ENCODE measurements at regions of chr2 and their contacts with region 1.

Region 1: DNA sequence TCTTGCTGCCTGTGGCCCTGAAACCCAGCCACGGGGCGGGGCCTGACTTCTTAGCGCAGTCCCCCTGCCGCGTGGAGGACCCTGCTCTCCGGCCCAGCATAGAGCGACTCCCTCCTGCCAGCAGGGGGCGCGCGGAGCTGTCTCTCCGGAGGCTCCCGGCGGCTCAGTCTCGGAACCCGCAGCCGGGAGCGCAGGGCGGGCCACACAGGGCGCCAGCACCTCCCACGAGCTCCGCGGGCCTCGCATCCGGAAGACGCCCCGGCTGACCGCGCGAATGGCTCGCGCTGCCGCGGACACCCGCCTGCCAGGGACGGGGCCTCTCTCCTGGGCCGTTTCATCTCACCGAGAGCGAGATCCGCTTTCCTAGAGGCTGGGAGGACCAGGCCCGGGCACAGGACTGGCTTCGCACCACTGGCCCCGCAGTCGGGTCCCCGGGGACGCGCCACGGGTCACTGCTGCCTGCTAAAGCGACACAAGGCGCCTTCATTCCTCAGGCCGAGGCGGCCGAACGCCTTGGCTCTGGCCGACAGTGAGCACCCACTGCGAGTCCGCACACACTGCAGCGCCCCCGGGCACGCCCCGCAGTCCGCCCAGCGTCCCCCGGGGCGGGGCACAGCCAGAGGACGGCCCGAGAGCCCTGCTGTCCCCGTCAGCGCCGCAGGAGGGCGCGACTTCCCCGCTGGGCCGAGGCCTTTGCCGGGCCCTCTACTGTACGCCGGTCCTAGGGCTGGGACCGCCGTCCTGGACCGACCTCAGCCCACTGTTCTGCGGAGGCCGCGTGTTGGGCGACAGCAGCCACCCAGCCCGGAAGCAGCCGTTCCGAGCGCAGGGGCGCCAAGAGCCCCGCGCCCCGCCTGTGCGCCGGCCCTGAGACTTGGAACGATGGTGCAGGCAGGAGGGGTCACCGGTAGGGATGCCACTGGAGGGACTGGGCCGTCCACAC is 39.0 kb upstream of the ARHGEF4 start:
- DNase-seq: no peak
- H3K4me3 ChIP-seq: peak overlapping the region; percentile 66 to 90
- H3K27ac ChIP-seq: peak overlapping the region; percentile 97
- H3K4me1 ChIP-seq: peaks cover 14% of the 10 kb centered on the region
- H3K27me3 ChIP-seq: no peaks in the 10 kb centered on the region
- CTCF ChIP-seq: peak; percentile 60 to 85 (median 63)
- POLR2A ChIP-seq: peak in 1 of 2 donors; percentile 13

Region 2: GRCh38 chr2:129957911-129958310 is 839.9 kb before region 1 on chr2:
- intact Hi-C with region 1: no loop called
- DNase-seq: no peak
- H3K4me3 ChIP-seq: no peak overlapping the region
- H3K27ac ChIP-seq: no peak overlapping the region
- H3K4me1 ChIP-seq: no peaks in the 10 kb centered on the region
- H3K27me3 ChIP-seq: no peaks in the 10 kb centered on the region
- CTCF ChIP-seq: no peak
- POLR2A ChIP-seq: no peak

Region 3: GRCh38 chr2:130759910-130760753 is 37.6 kb before region 1 on chr2:
- intact Hi-C with region 1: no loop called
- DNase-seq: peak in 1 of 2 donors; percentile 81
- H3K4me3 ChIP-seq: no peak overlapping the region
- H3K27ac ChIP-seq: no peak overlapping the region
- H3K4me1 ChIP-seq: peaks cover 4% of the 10 kb centered on the region
- H3K27me3 ChIP-seq: peaks cover 5% of the 10 kb centered on the region
- CTCF ChIP-seq: no peak
- POLR2A ChIP-seq: no peak

Region 4: DNA sequence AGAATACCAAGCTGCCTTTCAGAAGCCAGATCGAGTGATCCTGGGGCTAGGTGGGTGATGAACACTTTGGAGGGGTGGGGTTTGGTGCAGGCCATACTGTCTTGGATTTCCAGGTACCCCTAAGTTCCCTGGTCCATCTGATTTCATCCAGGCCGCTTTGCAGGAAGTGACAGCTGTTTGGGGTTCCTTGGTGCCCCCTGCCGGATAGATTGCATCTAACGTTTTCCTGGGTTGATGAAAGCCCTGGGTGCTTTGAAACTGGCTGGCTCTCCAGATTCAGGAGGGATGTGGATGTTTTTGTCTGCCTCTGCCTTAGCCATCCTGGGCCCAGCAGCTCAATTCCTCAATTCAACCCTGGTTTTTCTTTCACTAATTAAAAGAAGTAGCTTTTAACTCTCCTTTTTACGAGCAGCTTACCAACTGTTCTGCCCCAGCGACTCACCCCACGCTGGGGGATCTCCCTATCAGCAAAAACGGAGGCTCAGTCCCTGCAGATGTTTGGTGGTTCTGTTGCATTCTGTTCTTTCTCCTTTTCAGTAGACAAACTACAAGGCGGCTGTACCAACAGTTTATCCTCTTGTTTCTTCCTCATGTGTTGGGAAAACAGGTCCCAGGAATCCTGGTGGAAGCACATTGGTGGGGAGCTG is 76.1 kb after region 1 on chr2:
- intact Hi-C with region 1: loop called (anchors 5 kb)
- DNase-seq: no peak
- H3K4me3 ChIP-seq: no peak overlapping the region
- H3K27ac ChIP-seq: no peak overlapping the region
- H3K4me1 ChIP-seq: no peaks in the 10 kb centered on the region
- H3K27me3 ChIP-seq: no peaks in the 10 kb centered on the region
- CTCF ChIP-seq: peak; percentile 19 to 59 (median 36)
- POLR2A ChIP-seq: no peak

Region 5: GRCh38 chr2:131754929-131755720 is 957.4 kb after region 1 on chr2:
- intact Hi-C with region 1: no loop called
- DNase-seq: no peak
- H3K4me3 ChIP-seq: no peak overlapping the region
- H3K27ac ChIP-seq: no peak overlapping the region
- H3K4me1 ChIP-seq: no peaks in the 10 kb centered on the region
- H3K27me3 ChIP-seq: no peaks in the 10 kb centered on the region
- CTCF ChIP-seq: no peak
- POLR2A ChIP-seq: no peak

Region 6: DNA sequence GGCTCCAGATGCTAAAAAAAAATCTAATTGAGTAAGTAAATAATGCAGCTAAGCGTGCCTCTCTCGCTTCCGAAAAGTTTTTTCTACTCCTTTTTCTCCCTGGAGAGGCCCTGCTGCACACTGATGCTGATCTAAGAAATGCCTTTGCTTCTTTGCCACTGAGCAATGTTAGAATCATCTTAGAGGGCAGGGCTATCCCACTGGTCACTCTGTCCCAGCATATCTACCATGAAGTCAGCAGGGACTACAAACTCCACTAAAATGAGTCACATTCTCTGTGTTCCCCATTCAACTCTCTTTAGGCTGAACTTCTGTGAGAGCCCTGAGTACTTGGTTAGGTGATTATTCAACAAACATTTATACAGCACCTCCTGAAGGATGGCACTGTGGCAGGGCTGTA is 1999.8 kb after region 1 on chr2:
- intact Hi-C with region 1: no loop called
- DNase-seq: no peak
- H3K4me3 ChIP-seq: no peak overlapping the region
- H3K27ac ChIP-seq: no peak overlapping the region
- H3K4me1 ChIP-seq: no peaks in the 10 kb centered on the region
- H3K27me3 ChIP-seq: no peaks in the 10 kb centered on the region
- CTCF ChIP-seq: no peak
- POLR2A ChIP-seq: no peak